Tibial artery (tissue), 4 donors: ENCODE measurements at regions of chr11 and their contacts with region 1.

Region 1: GRCh38 chr11:15197696-15198095 is 83.0 kb downstream of the INSC start:
- DNase-seq: no peak
- H3K4me3 ChIP-seq: no peak overlapping the region
- H3K27ac ChIP-seq: no peak overlapping the region
- H3K4me1 ChIP-seq: peaks cover 0 to 44% (median 31%) of the 10 kb centered on the region in 4 donors
- H3K27me3 ChIP-seq: no peaks in the 10 kb centered on the region
- CTCF ChIP-seq: no peak

Region 2: GRCh38 chr11:14954581-14954980 is 243.1 kb before region 1 on chr11:
- intact Hi-C with region 1: no loop called
- DNase-seq: no peak
- H3K4me3 ChIP-seq: no peak overlapping the region
- H3K27ac ChIP-seq: no peak overlapping the region
- H3K4me1 ChIP-seq: no peaks in the 10 kb centered on the region
- H3K27me3 ChIP-seq: no peaks in the 10 kb centered on the region
- CTCF ChIP-seq: no peak

Region 3: DNA sequence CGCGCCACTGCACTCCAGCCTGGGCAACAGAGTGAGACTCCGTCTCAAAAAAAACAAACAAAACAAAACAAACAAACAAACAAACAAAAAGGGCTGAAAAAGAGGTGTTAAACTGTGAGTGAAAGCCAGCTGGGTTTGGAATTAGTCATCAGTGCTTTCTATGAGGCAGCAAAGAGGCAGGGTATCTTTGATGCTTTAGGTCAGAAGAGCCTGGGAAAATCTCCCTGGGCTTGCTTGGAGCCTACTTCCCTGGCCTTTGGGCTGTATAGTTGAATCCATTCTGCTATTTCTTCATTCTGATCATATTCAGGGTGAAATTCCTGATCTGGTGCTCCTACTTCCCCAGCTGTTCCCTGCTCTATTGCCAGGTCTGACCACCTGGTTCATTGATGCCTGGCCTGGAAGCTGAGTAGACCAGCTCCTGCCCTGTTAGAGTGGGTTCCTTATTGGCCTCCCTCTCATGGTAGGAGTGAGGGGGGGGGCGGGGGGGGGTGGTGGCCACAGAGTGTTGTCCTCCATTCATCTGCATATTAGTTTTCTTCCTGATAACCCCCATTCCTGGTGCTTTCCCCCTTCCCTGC is 17.4 kb before region 1 on chr11:
- intact Hi-C with region 1: loop called (anchors 1 kb)
- DNase-seq: no peak
- H3K4me3 ChIP-seq: no peak overlapping the region
- H3K27ac ChIP-seq: peak overlapping the region in 1 of 2 donors; percentile 40
- H3K4me1 ChIP-seq: peaks cover 0 to 57% (median 23%) of the 10 kb centered on the region in 4 donors
- H3K27me3 ChIP-seq: no peaks in the 10 kb centered on the region
- CTCF ChIP-seq: no peak

Region 4: DNA sequence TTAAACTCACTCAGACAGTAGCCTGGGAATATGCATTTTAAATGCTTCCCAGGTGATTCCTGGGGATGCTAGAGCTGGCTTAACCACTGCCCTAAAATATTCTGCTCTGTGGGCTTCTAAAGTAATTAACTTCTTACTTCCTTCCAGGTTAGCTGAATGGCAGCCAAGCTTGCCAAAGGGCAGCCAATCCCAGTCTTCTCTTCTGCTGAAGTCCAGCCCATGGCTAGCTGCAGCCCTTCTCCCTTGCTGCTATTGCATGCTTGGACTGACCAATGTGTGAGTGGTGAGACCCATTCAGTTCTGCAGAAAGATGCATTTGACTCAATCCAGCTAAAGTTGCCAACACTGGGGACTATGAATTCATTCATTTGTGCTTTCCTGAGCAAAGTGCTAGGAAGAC is 746.8 kb after region 1 on chr11:
- intact Hi-C with region 1: no loop called
- DNase-seq: no peak
- H3K4me3 ChIP-seq: no peak overlapping the region
- H3K27ac ChIP-seq: no peak overlapping the region
- H3K4me1 ChIP-seq: peaks cover 0 to 8% (median 3%) of the 10 kb centered on the region in 4 donors
- H3K27me3 ChIP-seq: no peaks in the 10 kb centered on the region
- CTCF ChIP-seq: no peak